Caco-2 (cell line): ENCODE measurements at regions of chr10 and their contacts with region 1.

Region 1: DNA sequence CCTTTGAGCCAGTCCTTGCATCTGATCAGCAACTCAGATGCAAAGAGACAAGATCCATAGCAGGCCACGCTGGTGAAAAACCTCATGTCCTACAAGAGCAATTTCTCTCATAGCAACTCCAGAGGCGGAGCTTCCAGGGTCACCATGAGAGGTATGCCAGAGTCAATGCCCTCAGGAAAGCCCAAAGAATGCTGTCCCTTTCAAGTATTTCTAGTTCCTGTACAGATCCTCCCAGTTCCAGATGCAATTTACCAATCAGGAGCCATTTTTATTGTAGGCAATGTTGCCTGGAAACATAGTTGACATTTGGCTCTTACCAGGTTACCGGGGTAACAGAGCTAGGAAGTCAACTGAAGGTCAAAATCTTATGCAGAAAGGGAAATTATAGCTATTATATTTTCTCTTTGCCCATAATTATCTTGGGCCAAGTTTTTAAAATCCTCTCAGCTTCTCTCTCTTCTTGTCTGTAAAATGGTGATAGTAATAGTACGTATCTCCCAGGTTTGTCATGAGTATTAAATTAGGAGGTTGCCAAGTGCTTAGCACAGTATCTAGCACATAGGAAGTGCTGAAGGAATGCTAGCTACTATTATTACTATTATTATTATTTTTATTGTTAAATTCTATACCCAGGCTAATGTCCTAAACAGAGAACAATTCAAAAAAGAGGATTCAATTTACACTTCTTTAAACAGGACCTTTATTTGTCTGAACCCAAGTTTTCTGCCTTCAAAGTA is 46.3 kb upstream of the TM9SF3 start:
- DNase-seq: peak; percentile 85 to 86
- H3K4me3 ChIP-seq: no peak overlapping the region
- H3K4me3 Mint-ChIP-seq: no peak overlapping the region
- H3K27ac Mint-ChIP-seq: peak overlapping the region; percentile 84
- H3K4me1 ChIP-seq: peaks cover 44% of the 10 kb centered on the region
- H3K4me1 Mint-ChIP-seq: peaks cover 18% of the 10 kb centered on the region
- H3K27me3 ChIP-seq: no peaks in the 10 kb centered on the region
- H3K27me3 Mint-ChIP-seq: no peaks in the 10 kb centered on the region
- CTCF ChIP-seq: no peak

Region 2: DNA sequence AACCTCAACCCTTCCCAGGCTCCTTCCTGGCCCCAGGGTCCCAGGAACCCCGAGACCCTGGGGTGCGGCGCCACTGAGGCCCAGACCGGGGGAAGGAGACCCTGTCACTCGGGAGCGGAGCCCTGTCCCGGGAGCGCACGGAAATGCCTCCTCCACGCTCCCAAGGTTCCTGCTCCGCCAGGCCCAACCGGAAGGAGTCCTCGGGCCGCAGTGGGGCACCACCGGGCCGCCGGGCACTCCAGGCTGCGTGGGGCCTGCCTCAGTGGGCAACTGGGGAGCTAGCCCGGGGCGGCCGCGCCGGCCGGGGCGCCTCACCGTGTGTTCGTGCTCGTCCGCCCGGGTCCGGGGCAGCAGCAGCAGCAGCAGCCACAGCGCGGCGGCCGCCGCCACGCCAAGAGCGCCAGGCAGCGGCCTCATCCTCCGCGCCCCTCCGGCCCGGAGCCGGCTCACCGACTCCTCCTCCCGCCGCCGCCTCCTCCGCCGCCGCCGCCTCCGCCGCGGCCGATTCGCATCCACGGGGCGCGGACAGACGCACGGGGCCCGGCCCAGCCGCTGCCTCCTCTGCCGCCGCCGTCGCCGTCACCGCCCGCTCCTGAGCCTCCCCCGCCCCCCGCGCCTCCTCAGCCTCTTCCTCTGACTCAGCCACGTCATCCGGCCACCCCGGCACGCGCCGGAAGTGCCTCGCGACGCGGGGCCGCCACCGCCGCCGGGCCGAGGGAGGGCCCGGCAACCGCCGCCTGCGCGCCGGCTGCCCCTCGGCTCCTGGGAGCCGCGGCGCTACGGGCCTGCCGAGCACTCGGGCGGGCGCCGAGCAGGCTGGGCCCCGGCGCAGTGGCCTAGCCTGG is 46.5 kb before region 1 on chr10 and contains the start of gene TM9SF3:
- CTCF ChIA-PET with region 1: no interaction called
- POLR2A ChIA-PET with region 1: interaction called, 5 read pairs
- intact Hi-C with region 1: loop called (anchors 2 kb)
- DNase-seq: peak; percentile 92 to 93
- H3K4me3 ChIP-seq: peak within 1 kb of the TSS; percentile 95
- H3K4me3 Mint-ChIP-seq: no peak within 1 kb of the TSS
- H3K27ac Mint-ChIP-seq: peak within 1 kb of the TSS; percentile 95
- H3K4me1 ChIP-seq: peaks cover 41% of the 10 kb centered on the region
- H3K4me1 Mint-ChIP-seq: peaks cover 6% of the 10 kb centered on the region
- H3K27me3 ChIP-seq: no peaks in the 10 kb centered on the region
- H3K27me3 Mint-ChIP-seq: no peaks in the 10 kb centered on the region
- CTCF ChIP-seq: no peak
- total RNA-seq, gene TM9SF3: 176 and 184 TPM in 2 replicates

Region 3: DNA sequence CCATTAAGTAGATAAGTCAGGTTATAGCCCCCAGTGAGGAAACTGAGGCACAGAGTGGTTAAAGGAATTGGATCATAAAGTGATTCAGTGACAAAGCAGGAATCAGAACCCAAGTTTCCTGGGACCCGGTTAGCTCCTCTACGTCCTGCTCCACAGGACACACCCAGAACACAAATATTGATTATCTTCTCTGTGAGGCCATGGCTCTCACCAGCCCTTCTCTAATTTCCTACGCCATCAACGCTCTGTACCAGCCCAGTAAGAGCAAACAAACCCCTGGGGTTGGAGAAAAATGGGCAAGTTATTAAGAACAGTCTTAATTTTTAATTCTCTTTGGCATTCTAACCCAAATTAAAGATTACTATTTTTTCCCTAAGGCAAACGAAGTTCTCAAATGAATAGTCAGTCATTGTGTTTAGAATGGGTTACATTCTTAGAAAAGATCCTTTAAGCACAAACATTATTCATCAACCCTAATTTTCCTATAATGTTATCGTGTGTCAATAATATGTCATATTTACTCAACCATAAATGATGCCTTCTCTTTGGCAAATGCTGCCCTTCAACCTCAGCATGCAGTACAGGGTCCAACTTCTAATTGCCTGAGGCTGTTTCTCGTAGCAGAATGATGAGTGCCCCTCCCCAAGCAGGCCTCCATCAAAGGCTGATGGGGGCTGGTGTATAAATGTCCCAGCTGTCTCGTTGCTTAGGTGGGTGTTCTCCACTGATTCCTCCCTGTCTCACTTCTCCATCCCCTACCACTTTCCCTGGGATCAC is 20.9 kb before region 1 on chr10:
- CTCF ChIA-PET with region 1: no interaction called
- POLR2A ChIA-PET with region 1: no interaction called
- intact Hi-C with region 1: loop called (anchors 1 kb)
- DNase-seq: peak; percentile 74 to 88
- H3K4me3 ChIP-seq: no peak overlapping the region
- H3K4me3 Mint-ChIP-seq: peak overlapping the region; percentile 17
- H3K27ac Mint-ChIP-seq: peak overlapping the region; percentile 28
- H3K4me1 ChIP-seq: peaks cover 51% of the 10 kb centered on the region
- H3K4me1 Mint-ChIP-seq: peaks cover 47% of the 10 kb centered on the region
- H3K27me3 ChIP-seq: no peaks in the 10 kb centered on the region
- H3K27me3 Mint-ChIP-seq: no peaks in the 10 kb centered on the region
- CTCF ChIP-seq: no peak

Region 4: GRCh38 chr10:96784253-96784652 is 151.1 kb after region 1 on chr10:
- CTCF ChIA-PET with region 1: no interaction called
- POLR2A ChIA-PET with region 1: no interaction called
- intact Hi-C with region 1: no loop called
- DNase-seq: no peak
- H3K4me3 ChIP-seq: no peak overlapping the region
- H3K4me3 Mint-ChIP-seq: no peak overlapping the region
- H3K27ac Mint-ChIP-seq: no peak overlapping the region
- H3K4me1 ChIP-seq: peaks cover 8% of the 10 kb centered on the region
- H3K4me1 Mint-ChIP-seq: no peaks in the 10 kb centered on the region
- H3K27me3 ChIP-seq: no peaks in the 10 kb centered on the region
- H3K27me3 Mint-ChIP-seq: no peaks in the 10 kb centered on the region
- CTCF ChIP-seq: no peak